Activated CD8-positive, alpha-beta T cell treated with anti-CD3 and anti-CD28 coated beads for 36 hours (primary cell): ENCODE measurements at regions of chr15 and their contacts with region 1.

Region 1: GRCh38 chr15:89206908-89207331 is 14.5 kb downstream of the RLBP1 start:
- DNase-seq: peak; percentile 81
- ATAC-seq: peak; percentile 79
- H3K4me3 Mint-ChIP-seq: no peak overlapping the region
- H3K27ac Mint-ChIP-seq: no peak overlapping the region
- H3K4me1 Mint-ChIP-seq: peaks cover 31% of the 10 kb centered on the region
- H3K27me3 Mint-ChIP-seq: no peaks in the 10 kb centered on the region
- CTCF ChIP-seq: peak; percentile 99

Region 2: DNA sequence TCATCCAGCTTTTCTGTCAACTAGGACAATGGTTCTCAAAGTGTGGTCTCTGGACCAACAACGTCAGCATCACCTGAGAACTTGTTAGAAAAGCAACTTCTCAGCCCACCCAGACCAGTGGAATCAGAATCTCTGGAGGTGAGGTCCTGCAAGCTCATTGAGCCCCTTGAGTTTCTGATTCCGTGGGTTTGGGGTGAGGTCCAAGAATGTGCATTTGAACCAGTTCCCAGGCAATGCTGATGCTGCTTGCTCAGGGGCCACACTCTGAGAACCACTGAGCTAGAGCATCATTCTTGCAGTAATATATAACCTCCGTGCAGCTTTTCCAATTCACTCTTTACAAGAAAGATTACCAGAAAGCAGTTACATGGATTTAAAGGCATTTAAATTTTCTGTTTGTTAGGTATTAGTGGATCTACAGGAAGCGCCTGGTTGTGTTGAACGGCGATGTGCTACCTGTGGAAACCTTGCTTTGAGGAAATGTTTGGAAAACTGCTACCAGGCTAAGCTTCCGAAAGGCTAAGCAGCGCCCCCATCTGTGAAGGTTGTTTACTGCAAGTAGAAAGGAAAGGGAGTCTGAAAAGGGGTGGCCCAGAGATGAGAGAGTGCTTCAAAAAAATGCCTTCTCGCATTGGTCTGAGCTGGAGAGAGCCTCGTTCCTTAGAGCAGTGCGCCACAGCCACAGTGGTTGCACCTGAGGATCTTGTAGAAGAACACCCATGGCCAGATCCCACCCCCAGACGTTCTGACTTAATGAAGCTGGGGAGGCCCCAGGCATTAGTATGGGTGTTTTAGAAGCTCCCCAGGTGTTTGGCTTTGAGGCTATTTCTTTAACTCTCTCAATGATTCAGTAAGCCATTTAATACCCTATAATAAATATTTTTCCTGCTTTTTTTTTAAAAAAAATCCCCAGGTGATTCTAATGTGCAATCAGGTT is 35.5 kb before region 1 on chr15:
- CTCF ChIA-PET with region 1: interaction called, 37 read pairs
- POLR2A ChIA-PET with region 1: no interaction called
- intact Hi-C with region 1: no loop called
- DNase-seq: peak; percentile 49
- ATAC-seq: no peak
- H3K4me3 Mint-ChIP-seq: no peak overlapping the region
- H3K27ac Mint-ChIP-seq: no peak overlapping the region
- H3K4me1 Mint-ChIP-seq: peaks cover 29% of the 10 kb centered on the region
- H3K27me3 Mint-ChIP-seq: no peaks in the 10 kb centered on the region
- CTCF ChIP-seq: peak; percentile 80

Region 3: GRCh38 chr15:89221543-89221942 is 14.6 kb after region 1 on chr15 and contains the start of gene RLBP1:
- CTCF ChIA-PET with region 1: interaction called, 81 read pairs
- POLR2A ChIA-PET with region 1: interaction called, 3 read pairs
- intact Hi-C with region 1: no loop called
- DNase-seq: no peak
- ATAC-seq: no peak
- H3K4me3 Mint-ChIP-seq: no peak within 1 kb of the TSS
- H3K27ac Mint-ChIP-seq: no peak within 1 kb of the TSS
- H3K4me1 Mint-ChIP-seq: no peaks in the 10 kb centered on the region
- H3K27me3 Mint-ChIP-seq: peaks cover 3% of the 10 kb centered on the region
- CTCF ChIP-seq: no peak
- total RNA-seq, gene RLBP1: not detected

Region 4: GRCh38 chr15:89278307-89278706 is 71.4 kb after region 1 on chr15:
- CTCF ChIA-PET with region 1: interaction called, 53 read pairs
- POLR2A ChIA-PET with region 1: no interaction called
- intact Hi-C with region 1: loop called (anchors 10 kb)
- DNase-seq: no peak
- ATAC-seq: no peak
- H3K4me3 Mint-ChIP-seq: no peak overlapping the region
- H3K27ac Mint-ChIP-seq: no peak overlapping the region
- H3K4me1 Mint-ChIP-seq: no peaks in the 10 kb centered on the region
- H3K27me3 Mint-ChIP-seq: no peaks in the 10 kb centered on the region
- CTCF ChIP-seq: no peak

Region 5: GRCh38 chr15:89321521-89322410 is 114.8 kb after region 1 on chr15:
- CTCF ChIA-PET with region 1: interaction called, 34 read pairs
- POLR2A ChIA-PET with region 1: interaction called, 5 read pairs
- intact Hi-C with region 1: no loop called
- DNase-seq: no peak
- ATAC-seq: no peak
- H3K4me3 Mint-ChIP-seq: no peak overlapping the region
- H3K27ac Mint-ChIP-seq: peak overlapping the region; percentile 8
- H3K4me1 Mint-ChIP-seq: peaks cover 14% of the 10 kb centered on the region
- H3K27me3 Mint-ChIP-seq: no peaks in the 10 kb centered on the region
- CTCF ChIP-seq: no peak

Region 6: DNA sequence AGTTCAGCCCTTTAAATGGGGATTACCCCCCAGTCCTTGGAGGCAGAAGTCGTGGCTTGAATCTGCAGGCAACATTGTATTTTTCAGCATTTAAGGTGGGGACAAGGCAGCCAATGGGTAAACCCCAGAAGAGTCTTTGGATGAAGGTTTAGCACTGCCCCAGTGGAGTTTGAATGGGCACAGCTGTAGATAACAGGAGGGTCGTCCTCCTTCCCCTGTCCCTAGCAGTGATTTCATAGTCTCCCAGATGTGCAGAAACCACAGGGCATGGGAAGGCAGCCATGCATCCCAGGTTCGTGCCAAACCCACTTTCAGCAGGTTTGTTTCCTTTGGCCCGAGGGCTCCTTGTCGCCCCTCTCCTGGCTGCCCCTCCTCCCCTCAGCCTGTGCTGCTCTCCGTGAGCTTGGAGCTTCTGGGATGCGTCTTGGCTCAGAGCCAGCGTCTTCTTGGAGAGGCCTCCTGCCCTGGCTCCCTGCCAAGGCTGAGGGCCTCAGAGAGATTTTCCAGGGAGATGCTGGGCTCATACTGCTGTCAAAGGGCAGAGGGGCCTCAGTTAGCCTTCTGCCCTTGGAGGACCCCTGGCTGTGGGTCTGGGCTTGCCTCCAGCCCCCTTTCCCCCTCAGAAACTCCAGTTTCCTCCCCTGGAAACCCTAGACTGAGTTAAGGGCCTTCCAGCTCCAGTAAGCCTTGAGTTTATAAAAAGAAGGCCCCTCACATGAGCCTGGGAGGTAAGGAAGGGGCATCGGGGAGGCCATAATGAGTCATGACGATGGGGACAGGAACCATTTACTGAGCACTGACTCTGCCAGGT is 176.7 kb after region 1 on chr15:
- CTCF ChIA-PET with region 1: no interaction called
- POLR2A ChIA-PET with region 1: no interaction called
- intact Hi-C with region 1: no loop called
- DNase-seq: no peak
- ATAC-seq: no peak
- H3K4me3 Mint-ChIP-seq: no peak overlapping the region
- H3K27ac Mint-ChIP-seq: no peak overlapping the region
- H3K4me1 Mint-ChIP-seq: peaks cover 2% of the 10 kb centered on the region
- H3K27me3 Mint-ChIP-seq: peaks cover 31% of the 10 kb centered on the region
- CTCF ChIP-seq: no peak